Dorsolateral prefrontal cortex (tissue), 120 donors: ENCODE measurements at regions of chr6 and their contacts with region 1.

Region 1: GRCh38 chr6:13935190-13935880 is 10.6 kb downstream of the RNF182 start:
- DNase-seq: no peak
- H3K4me3 ChIP-seq: no peak overlapping the region
- H3K27ac ChIP-seq: no peak overlapping the region
- H3K27me3 ChIP-seq: peaks cover 0 to 14% (median 2%) of the 10 kb centered on the region in 45 donors
- CTCF ChIP-seq: no peak

Region 2: DNA sequence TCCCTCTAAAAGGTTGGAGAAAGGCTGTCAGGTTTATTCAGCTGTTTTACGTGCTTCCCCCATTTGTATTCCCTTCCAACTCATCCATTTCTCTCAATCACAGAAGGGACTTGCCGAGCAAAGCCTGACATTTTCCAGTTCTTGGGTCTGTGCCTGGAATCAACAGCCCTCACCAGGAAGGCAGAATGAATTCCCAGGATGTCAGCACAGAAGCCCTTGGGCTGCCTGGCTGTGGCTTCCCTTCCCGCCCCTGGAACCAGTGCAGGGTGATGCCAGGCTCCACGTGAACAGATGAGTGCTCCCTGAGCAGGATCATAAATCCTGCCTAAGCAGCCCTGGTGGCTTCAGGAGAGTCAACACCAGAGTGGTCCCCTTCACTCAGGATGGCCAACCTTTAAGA is 96.2 kb after region 1 on chr6:
- intact Hi-C with region 1: loop called in 1 of 2 experiments (anchors 5 kb)
- DNase-seq: peak in 1 of 10 donors; percentile 20
- H3K4me3 ChIP-seq: no peak overlapping the region
- H3K27ac ChIP-seq: no peak overlapping the region
- H3K27me3 ChIP-seq: peaks cover 0 to 4% (median 0%) of the 10 kb centered on the region in 45 donors
- CTCF ChIP-seq: no peak